ENCODE measurements at regions of chr10 and their contacts with region 1.

Region 1: DNA sequence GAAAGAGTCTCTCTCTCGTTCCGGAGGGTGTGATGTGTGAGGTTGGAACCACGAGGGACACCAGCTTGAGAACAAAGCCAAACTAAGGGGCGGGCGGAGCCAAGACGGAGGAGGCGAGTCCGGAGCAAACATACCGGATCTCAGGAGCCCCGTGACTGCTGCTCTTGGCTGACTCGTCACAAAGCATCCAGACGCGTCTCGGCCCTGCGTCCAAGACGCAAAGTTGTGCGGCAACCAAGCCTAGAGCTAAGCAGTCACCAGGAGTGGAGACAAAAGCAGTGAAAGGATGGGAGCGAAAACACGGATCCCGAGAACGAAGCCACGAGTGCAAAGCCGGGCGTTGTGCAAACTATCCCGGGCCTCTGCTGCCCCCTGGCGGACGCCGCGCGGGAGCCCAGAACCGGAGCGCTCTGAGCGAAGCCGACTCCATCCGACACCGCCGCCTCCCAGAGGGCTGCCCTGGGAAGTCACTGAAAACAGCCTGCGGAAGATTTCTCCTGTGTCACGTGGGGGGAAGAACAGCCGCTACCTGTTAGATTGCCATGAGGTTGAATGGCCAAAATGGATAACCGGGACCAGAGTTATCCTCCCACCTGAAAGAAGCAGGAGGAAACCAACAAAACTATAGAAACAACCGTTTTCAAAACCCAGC is 46.4 kb upstream of the TMEM72 start:
- DNase-seq: peak; percentile 87 to 98
- H3K4me3 ChIP-seq: peak overlapping the region; percentile 21
- CTCF ChIP-seq: peak in 2 of 3 donors; percentile 39 to 88
- POLR2A ChIP-seq: no peak

Region 2: DNA sequence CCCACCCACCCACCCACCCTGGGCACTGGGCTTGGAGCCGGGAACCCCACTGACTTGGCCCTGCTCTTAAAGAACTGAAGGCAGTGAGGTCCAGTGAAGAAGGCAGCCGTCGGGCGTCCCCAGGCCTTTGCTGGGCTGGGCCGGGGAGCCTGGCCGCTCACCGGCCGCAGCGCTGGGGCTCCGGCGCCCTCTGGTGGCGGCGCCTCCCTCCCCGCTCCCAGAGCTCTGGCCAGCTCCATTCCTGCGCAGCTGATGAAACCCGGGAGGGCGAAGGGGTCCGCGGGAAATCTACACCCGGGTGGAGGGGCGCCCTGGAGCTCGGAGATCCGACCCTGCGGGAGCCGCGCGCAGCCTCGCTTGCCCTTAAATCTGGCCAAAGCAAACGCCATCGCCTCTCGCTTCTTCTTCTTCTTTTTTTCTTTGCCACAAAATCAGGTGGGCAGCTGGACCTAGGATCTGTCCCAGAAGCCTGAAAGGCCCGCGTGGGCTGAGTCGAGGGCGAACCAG is 478.2 kb before region 1 on chr10:
- intact Hi-C with region 1: loop called (anchors 5 kb)
- DNase-seq: peak in 1 of 2 donors; percentile 93
- H3K4me3 ChIP-seq: no peak overlapping the region
- CTCF ChIP-seq: peak in 1 of 3 donors; percentile 53
- POLR2A ChIP-seq: no peak

Region 3: GRCh38 chr10:45040921-45041542 is 176.3 kb after region 1 on chr10:
- intact Hi-C with region 1: no loop called
- DNase-seq: no peak
- H3K4me3 ChIP-seq: no peak overlapping the region
- CTCF ChIP-seq: no peak
- POLR2A ChIP-seq: no peak

Measured in lower leg skin (tissue), 4 donors.